BJ (cell line): ENCODE measurements at regions of chr9 and their contacts with region 1.

Region 1: DNA sequence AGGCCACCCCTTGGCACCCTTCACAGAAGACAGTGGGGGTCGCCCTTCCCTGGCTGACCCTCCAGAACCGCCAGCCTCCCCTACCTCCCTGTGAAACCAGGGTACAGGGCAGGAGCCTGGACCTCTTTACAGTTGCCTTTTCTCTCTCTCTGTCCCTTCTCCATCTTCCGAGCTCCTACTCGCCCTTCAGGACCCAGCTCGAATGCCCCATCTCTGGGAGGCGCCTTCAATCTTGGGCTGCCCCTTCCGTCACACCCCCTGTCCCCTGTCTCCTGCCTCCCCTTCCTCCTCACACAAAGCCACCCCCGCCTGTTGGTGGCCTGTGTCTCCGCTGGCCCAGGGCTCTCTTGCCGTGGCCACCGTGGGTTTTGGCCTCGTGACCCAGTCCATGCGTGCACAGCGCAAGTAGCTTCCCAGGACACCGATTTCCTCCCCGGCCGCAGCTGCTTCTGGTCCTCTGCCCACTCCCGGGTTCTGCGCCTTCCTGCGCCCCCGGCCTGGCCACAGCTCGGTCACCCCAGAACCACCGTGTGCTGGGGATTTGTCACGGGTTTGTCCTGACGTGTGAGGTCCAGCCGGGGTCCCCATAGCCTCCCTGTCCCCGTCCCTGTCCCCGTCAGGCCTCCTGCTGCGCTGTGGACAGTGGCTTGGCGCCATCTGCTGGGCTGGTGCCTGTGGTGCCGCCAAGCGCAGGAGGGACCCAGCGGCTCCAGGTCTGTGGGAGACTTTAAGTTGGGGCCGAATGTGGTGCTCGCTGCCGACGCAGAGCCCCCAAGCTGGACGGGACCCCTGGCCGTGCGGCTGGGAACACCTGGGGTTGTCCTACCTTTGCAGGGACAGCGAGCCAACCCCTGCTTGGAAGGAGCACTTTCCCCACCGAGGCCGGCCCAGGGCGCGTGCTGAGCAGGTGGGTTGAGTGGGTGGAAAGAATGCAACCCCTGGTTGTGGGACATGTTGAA is 4.0 kb upstream of the TMEM250 start:
- DNase-seq: no peak
- H3K4me3 ChIP-seq: no peak overlapping the region; the same call in 1 of the 2 replicates
- H3K27me3 ChIP-seq: peaks cover 6% of the 10 kb centered on the region
- CTCF ChIP-seq: peak; percentile 96

Region 2: GRCh38 chr9:135857371-135857786 is 265.3 kb before region 1 on chr9:
- CTCF ChIA-PET with region 1: interaction called, 14 read pairs
- POLR2A ChIA-PET with region 1: no interaction called
- DNase-seq: peak; percentile 7
- H3K4me3 ChIP-seq: no peak overlapping the region
- H3K27me3 ChIP-seq: no peaks in the 10 kb centered on the region
- CTCF ChIP-seq: no peak

Region 3: DNA sequence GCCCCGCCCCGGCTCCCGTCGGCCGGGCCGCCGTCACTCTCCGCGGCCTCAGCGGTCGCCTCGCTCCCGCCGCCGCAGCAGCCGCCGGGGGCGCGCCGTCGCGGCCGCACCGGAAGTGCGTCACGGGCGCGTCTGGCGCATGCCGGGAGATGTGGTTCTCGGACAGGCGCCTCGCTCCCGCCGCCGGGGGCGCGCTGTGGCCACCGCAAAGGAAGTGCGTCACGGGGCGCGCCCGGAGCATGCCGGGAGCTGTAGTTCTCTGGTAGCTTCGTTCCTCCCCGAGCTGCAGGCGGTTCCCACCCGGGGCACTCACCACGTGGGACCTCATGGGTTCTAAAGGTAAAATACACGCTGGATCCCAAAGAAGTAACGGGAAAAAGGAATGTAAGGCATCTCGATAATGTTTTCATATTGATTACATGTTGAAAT is 161.4 kb before region 1 on chr9 and contains the start of gene UBAC1:
- CTCF ChIA-PET with region 1: interaction called, 19 read pairs
- POLR2A ChIA-PET with region 1: no interaction called
- DNase-seq: peak; percentile 58
- H3K4me3 ChIP-seq: peak within 1 kb of the TSS; percentile 88
- H3K27me3 ChIP-seq: peaks cover 5% of the 10 kb centered on the region; the same call in 1 of the 2 replicates
- CTCF ChIP-seq: peak; percentile 41
- polyA plus RNA-seq, gene UBAC1: 42.1 and 50.2 TPM in 2 replicates

Region 4: DNA sequence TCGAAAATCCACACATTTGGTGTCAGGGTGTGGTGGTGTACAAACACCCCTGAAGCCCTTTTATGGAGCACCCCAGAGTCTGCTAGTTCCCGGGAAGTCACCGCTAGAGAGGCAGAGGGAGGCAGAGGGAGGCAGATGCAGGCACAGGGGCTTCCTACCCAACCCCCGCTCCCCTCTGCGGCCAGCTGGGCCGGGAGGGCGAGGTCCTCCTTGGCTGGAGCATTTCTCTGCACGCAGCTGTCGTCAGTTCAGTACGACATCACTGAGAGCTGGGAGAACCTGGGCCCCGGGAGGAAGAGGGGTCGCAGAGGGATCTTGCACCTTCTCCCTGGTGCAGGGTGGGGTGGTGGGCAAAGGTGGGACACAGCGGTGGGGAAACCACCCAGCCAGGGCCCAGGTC is 145.8 kb before region 1 on chr9:
- CTCF ChIA-PET with region 1: interaction called, 16 read pairs
- POLR2A ChIA-PET with region 1: no interaction called
- DNase-seq: no peak
- H3K4me3 ChIP-seq: no peak overlapping the region
- H3K27me3 ChIP-seq: peaks cover 3% of the 10 kb centered on the region; the same call in 1 of the 2 replicates
- CTCF ChIP-seq: no peak

Region 5: DNA sequence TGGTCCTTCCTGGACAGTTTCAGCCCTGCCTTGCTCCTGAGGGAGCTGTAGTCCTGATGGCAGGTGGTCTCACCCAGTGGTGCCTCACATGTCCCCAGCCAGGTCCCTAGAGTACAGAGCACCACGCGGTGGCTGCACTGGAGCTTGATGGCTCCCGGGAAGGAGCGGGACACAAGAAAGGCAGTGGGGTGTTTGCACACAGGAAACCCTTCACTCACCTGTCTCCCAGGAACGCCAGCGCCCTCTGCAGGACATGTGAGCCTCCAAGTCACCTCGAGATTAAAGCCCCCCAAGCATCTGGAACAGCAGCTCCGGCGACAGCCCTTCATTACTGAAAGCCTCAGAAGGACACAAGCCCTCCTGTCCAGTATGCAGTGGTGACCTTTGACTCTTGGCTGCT is 15.9 kb after region 1 on chr9:
- CTCF ChIA-PET with region 1: interaction called, 10 read pairs
- POLR2A ChIA-PET with region 1: no interaction called
- DNase-seq: no peak
- H3K4me3 ChIP-seq: no peak overlapping the region
- H3K27me3 ChIP-seq: peaks cover 28% of the 10 kb centered on the region
- CTCF ChIP-seq: peak; percentile 44